ENCODE measurements at regions of chr9 and their contacts with region 1.

Region 1: DNA sequence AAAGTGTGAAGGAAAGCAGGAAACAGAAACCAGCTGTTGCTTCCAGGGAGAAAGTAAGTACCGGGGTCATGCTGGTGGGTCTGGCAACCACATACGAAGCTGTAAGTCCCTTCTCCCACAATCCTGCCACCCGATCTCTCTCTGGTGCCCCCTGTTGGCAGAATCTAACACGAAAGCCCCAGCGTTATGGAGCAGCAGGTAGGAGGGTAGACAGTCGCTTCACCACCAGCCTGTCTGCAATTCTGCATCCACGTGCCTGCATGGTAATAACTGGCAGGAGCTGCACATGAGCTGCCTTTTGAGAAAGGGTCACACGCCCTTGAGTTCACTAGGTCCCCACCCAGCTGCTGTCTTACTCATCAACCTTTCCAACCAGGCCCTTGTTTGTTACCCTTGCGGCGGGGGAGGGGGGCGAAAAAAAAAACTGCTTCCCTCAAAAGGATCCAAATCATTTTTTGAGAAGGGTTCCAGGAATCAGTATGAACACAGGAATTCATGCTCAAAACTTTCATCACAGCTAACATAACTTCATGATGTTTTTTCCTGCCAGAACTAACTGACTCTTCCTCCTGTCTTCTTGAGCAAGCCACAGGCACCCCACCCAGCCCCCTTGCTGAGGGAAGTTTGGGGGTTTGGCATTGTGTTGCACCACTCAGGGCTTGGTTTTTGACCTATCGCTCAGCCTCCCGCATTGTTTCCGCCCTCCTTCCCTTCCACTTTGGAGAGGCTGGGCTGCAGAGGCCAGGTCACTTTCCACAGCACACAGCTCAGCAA is 19.6 kb upstream of the TMEM252 start:
- DNase-seq: peak; percentile 46 to 69 (median 55)
- ATAC-seq: peak; percentile 21 to 78 (median 70)
- H3K4me3 ChIP-seq: peak overlapping the region in 1 of 12 donors; percentile 17
- H3K27ac ChIP-seq: peak overlapping the region in 6 of 12 donors; percentile 2 to 69 (median 38)
- H3K4me1 ChIP-seq: peaks cover 0 to 26% (median 7%) of the 10 kb centered on the region in 12 donors
- H3K27me3 ChIP-seq: no peaks in the 10 kb centered on the region
- CTCF ChIP-seq: peak in 10 of 12 donors; percentile 29 to 57 (median 42)
- POLR2A ChIP-seq: no peak

Region 2: DNA sequence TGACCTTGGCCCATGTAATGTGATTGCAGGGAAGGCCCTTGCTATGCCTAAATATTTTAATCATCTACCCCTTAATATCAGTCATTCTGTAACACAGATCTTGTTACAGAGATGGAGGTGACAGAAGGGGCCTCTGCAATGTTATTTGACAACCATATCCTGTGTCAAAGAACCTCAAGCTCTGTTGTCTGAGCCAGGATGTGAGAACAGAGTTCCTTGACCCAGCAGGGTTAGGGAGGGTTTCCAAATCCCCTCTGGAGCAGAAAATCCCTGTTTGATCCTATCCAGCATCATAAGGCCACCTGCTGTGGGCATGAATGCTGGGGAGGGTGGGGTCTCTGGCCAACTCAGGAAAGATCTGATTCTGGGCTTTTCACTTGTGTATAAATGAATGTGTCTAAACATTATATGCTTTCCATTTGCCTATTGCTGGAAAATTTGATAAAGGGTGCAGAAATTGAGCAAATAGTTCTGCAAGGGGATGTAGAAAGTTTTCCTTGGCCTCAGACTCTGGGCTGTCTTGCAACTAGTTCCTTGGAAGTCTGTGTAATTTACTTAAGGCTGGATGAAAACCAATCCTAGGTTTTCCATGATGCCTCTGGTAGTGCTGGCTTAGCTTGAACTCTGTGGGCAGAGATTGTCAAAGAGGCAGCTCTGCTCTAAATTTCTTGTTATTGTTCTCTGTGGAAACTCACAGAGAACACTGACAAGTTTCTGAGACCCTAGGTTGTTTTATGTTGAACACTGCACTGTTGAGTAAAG is 132.9 kb before region 1 on chr9:
- intact Hi-C with region 1: loop called in 2 of 10 experiments (anchors 10 kb)
- DNase-seq: no peak
- ATAC-seq: peak in 3 of 4 donors; percentile 30 to 67 (median 43)
- H3K4me3 ChIP-seq: no peak overlapping the region
- H3K27ac ChIP-seq: peak overlapping the region in 2 of 12 donors; percentile 17 to 66
- H3K4me1 ChIP-seq: peaks cover 0 to 29% (median 9%) of the 10 kb centered on the region in 12 donors
- H3K27me3 ChIP-seq: no peaks in the 10 kb centered on the region
- CTCF ChIP-seq: no peak
- POLR2A ChIP-seq: no peak

Region 3: GRCh38 chr9:68437785-68438184 is 122.5 kb before region 1 on chr9:
- intact Hi-C with region 1: loop called in 1 of 10 experiments (anchors 10 kb)
- DNase-seq: peak; percentile 67 to 87 (median 81)
- ATAC-seq: peak; percentile 96 to 97 (median 96)
- H3K4me3 ChIP-seq: no peak overlapping the region
- H3K27ac ChIP-seq: peak overlapping the region in 10 of 12 donors; percentile 6 to 78 (median 50)
- H3K4me1 ChIP-seq: peaks cover 0 to 25% (median 16%) of the 10 kb centered on the region in 12 donors
- H3K27me3 ChIP-seq: no peaks in the 10 kb centered on the region
- CTCF ChIP-seq: no peak
- POLR2A ChIP-seq: no peak

Region 4: DNA sequence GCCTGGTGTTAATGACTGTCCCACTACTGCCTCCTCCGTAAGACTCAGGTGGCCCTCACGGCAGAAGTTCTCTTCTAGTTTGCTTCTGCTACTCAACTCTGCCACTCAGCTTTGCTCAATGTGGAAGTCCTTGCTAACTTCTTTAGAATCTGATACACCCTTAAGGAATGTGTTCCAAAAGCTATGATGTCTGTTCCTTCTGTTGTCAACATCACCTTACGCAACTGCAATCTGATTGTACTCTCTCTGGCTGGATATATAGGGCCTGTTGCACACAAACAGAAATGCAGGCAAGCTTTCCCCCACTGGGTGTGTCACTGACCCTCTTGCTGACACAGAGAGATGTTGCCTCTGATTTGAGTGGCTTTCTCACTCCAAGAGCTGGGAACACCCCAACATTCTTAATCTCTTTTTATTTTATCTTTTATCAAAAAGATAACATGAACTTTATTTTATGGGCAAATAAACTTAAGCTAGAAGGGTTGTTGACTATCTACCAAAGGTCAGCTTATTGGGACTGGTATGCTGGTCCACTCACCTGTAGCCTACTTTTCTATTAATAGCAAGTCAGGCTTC is 44.8 kb before region 1 on chr9:
- intact Hi-C with region 1: loop called in 2 of 10 experiments (anchors 5 to 10 kb)
- DNase-seq: no peak
- ATAC-seq: peak; percentile 41 to 77 (median 68)
- H3K4me3 ChIP-seq: no peak overlapping the region
- H3K27ac ChIP-seq: peak overlapping the region in 3 of 12 donors; percentile 7 to 55 (median 54)
- H3K4me1 ChIP-seq: peaks cover 0 to 28% (median 10%) of the 10 kb centered on the region in 12 donors
- H3K27me3 ChIP-seq: no peaks in the 10 kb centered on the region
- CTCF ChIP-seq: no peak
- POLR2A ChIP-seq: no peak

Region 5: DNA sequence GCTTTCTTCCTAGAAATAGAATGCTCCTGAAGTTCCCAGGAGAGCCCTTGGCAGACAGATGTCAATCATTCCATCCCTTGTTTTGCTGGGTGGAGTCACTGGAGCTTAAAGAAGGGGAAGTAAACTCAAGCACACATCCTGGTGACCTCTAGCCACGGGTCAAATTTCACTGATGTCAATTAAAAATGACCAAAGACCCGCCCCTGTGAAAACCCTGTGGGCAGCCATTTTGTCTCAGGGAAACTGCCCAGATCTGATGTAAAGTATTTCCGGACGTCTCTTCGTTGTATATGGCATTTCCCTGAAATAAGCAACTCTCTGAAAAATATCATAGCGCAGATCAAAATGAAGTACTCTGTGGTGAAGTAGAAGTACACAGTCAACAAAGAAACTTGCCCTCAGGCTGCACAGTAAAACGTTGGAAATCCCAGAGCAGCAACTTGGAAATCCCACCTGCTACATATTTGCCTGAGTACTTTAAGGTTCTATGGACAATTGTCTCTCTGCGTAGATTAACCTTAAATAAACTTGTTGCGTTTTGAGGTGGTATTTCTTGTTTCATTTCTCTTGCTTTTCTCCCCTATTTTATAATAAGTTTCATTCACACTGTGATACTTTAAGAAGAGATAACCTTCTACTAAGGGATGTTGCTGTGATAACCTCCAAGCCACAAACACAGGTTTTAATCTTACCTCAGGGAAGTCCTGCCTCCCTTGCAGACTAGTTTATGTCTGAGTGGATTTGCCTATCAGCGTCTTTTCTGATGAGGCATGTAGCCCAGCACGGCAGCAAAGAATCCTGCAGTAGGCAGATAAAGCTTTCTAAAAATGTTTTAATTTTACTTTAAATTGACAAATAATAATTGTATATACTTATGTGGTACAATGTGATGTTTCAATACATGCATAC is 83.9 kb after region 1 on chr9:
- intact Hi-C with region 1: no loop called
- DNase-seq: no peak
- ATAC-seq: no peak
- H3K4me3 ChIP-seq: no peak overlapping the region
- H3K27ac ChIP-seq: no peak overlapping the region
- H3K4me1 ChIP-seq: peaks cover 0 to 2% (median 0%) of the 10 kb centered on the region in 12 donors
- H3K27me3 ChIP-seq: no peaks in the 10 kb centered on the region
- CTCF ChIP-seq: no peak
- POLR2A ChIP-seq: no peak

Region 6: GRCh38 chr9:68669218-68669617 is 109.0 kb after region 1 on chr9:
- intact Hi-C with region 1: no loop called
- DNase-seq: no peak
- ATAC-seq: no peak
- H3K4me3 ChIP-seq: no peak overlapping the region
- H3K27ac ChIP-seq: no peak overlapping the region
- H3K4me1 ChIP-seq: peaks cover 0 to 8% (median 0%) of the 10 kb centered on the region in 12 donors
- H3K27me3 ChIP-seq: no peaks in the 10 kb centered on the region
- CTCF ChIP-seq: no peak
- POLR2A ChIP-seq: no peak

Measured in heart left ventricle (tissue), 16 donors.